Psoas muscle (tissue), 8 donors: ENCODE measurements at regions of chr2 and their contacts with region 1.

Region 1: GRCh38 chr2:10668402-10669012 is 21.3 kb downstream of the NOL10 start:
- DNase-seq: no peak
- ATAC-seq: peak in 2 of 4 donors; percentile 49 to 66
- H3K4me3 ChIP-seq: no peak overlapping the region
- H3K27ac ChIP-seq: no peak overlapping the region
- H3K4me1 ChIP-seq: no peaks in the 10 kb centered on the region
- H3K27me3 ChIP-seq: no peaks in the 10 kb centered on the region
- CTCF ChIP-seq: peak; percentile 69

Region 2: DNA sequence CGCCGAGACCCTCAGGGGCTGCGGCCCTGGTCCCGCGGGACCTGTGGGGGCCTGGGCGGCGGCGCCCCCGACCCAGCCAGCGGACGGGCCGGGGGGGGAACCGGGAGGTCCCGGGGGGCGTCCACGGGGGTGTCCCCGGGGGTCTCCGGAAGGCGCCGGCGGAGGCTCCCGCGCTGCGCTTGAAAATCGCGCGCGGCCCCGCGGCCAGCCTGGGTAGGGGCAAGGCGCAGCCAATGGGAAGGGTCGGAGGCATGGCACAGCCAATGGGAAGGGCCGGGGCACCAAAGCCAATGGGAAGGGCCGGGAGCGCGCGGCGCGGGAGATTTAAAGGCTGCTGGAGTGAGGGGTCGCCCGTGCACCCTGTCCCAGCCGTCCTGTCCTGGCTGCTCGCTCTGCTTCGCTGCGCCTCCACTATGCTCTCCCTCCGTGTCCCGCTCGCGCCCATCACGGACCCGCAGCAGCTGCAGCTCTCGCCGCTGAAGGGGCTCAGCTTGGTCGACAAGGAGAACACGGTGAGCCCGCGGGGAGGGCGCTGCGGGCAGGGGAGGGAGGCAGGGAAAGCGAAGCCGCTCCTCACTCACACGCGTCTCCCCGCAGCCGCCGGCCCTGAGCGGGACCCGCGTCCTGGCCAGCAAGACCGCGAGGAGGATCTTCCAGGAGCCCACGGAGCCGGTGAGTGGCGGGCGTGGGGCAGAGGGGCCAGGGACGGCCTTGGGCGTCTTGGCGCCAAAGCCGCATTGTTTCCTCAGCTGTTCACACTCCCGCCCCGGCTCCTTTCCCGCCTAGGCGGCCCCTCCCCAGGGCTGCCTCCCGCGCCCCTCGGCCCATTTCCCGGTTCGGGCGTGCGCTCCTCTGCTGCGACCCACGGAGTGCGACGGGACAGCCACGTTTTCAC is 545.9 kb before region 1 on chr2 and contains the start of gene RRM2:
- intact Hi-C with region 1: loop called in 1 of 2 experiments (anchors 5 kb)
- DNase-seq: peak; percentile 91 to 97
- ATAC-seq: peak; percentile 89 to 92 (median 90)
- H3K4me3 ChIP-seq: peak within 1 kb of the TSS; percentile 69
- H3K27ac ChIP-seq: no peak within 1 kb of the TSS
- H3K4me1 ChIP-seq: peaks cover 27% of the 10 kb centered on the region
- H3K27me3 ChIP-seq: peaks cover 0 to 12% (median 2%) of the 10 kb centered on the region in 3 donors
- CTCF ChIP-seq: no peak
- total RNA-seq, gene RRM2: 0.27 to 1.3 TPM in 2 of 4 donors, not detected in the others

Region 3: DNA sequence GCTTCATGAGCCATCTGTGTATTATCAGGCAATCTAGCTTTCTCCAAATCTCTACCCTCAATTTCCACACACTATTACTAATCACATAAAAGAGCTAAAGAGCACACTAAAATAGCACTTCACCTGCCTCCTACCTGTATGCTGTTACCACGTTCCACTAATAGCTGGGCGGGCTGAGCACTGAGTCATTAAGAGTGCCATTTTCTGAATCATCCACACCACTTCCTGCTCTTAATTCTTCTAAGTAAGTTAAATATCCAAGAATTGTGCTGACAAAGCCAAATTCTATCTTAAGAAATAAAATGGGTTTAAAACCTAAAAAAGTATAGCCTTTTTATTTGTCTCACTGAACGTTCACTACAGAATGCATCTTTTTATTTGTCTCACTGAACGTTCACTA is 14.4 kb before region 1 on chr2:
- intact Hi-C with region 1: no loop called
- DNase-seq: no peak
- ATAC-seq: no peak
- H3K4me3 ChIP-seq: no peak overlapping the region
- H3K27ac ChIP-seq: no peak overlapping the region
- H3K4me1 ChIP-seq: no peaks in the 10 kb centered on the region
- H3K27me3 ChIP-seq: no peaks in the 10 kb centered on the region
- CTCF ChIP-seq: no peak

Region 4: GRCh38 chr2:11090187-11090586 is 421.7 kb after region 1 on chr2:
- intact Hi-C with region 1: no loop called
- DNase-seq: no peak
- ATAC-seq: no peak
- H3K4me3 ChIP-seq: no peak overlapping the region
- H3K27ac ChIP-seq: no peak overlapping the region
- H3K4me1 ChIP-seq: no peaks in the 10 kb centered on the region
- H3K27me3 ChIP-seq: no peaks in the 10 kb centered on the region
- CTCF ChIP-seq: no peak